Head of caudate nucleus (tissue), 42 donors: ENCODE measurements at regions of chr5 and their contacts with region 1.

Region 1: GRCh38 chr5:112757468-112758208 is 20.0 kb downstream of the APC start:
- DNase-seq: peak in 2 of 42 donors; percentile 10 to 25

Region 2: GRCh38 chr5:112551419-112552032 is 206.1 kb before region 1 on chr5:
- intact Hi-C with region 1: loop called (anchors 2 kb)
- DNase-seq: peak in 25 of 42 donors; percentile 30 to 85 (median 63)